IMR-90 (cell line): ENCODE measurements at regions of chr17 and their contacts with region 1.

Region 1: GRCh38 chr17:39653662-39654331 is 11.4 kb upstream of the TCAP start:
- DNase-seq: no peak
- ATAC-seq: no peak; the same call in 1 of the 2 replicates
- H3K4me3 ChIP-seq: no peak overlapping the region
- H3K27ac ChIP-seq: no peak overlapping the region
- H3K4me1 ChIP-seq: peaks cover under 1% of the 10 kb centered on the region; the same call in 1 of the 2 replicates
- H3K27me3 ChIP-seq: no peaks in the 10 kb centered on the region
- CTCF ChIP-seq: peak; percentile 70
- POLR2A ChIP-seq: no peak
- RAD21 ChIP-seq: peak; percentile 33; the same call in 1 of the 2 replicates

Region 2: DNA sequence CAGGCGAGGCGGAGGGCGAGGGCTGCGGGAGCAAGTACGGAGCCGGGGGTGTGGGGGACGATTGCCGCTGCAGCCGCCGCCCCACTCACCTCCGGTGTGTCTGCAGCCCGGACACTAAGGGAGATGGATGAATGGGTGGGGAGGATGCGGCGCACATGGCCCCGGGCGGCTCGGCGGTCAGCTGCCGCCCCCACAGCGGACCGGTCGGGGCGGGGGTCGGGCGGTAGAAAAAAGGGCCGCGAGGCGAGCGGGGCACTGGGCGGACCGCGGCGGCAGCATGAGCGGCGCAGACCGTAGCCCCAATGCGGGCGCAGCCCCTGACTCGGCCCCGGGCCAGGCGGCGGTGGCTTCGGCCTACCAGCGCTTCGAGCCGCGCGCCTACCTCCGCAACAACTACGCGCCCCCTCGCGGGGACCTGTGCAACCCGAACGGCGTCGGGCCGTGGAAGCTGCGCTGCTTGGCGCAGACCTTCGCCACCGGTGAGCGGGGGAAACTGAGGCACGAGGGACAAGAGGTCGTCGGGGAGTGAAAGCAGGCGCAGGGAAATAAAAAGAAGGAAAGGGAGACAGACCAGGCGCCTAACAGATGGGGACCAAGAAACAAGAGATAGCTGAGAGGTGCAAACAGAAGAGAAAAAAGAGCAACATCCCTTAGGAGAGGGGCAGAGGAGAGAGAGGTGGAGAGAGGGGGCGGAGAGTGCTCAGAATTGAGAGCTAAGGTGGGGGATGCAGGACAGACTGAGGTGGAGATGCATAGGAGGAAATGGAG is 14.6 kb after region 1 on chr17 and contains the start of gene PNMT:
- CTCF ChIA-PET with region 1: interaction called, 10 read pairs
- POLR2A ChIA-PET with region 1: no interaction called
- dilution Hi-C with region 1: no loop called
- in situ Hi-C with region 1: no loop called
- intact Hi-C with region 1: no loop called
- DNase-seq: peak; percentile 39
- ATAC-seq: peak; percentile 67
- H3K4me3 ChIP-seq: no peak within 1 kb of the TSS
- H3K27ac ChIP-seq: no peak within 1 kb of the TSS
- H3K4me1 ChIP-seq: peaks cover 7% of the 10 kb centered on the region; the same call in 1 of the 2 replicates
- H3K27me3 ChIP-seq: peaks cover 44% of the 10 kb centered on the region
- CTCF ChIP-seq: peak; percentile 62
- POLR2A ChIP-seq: no peak
- RAD21 ChIP-seq: peak; percentile 49
- total RNA-seq, gene PNMT: not detected in 2 replicates

Region 3: GRCh38 chr17:39722965-39723848 is 69.4 kb after region 1 on chr17:
- CTCF ChIA-PET with region 1: interaction called, 15 read pairs
- POLR2A ChIA-PET with region 1: no interaction called
- dilution Hi-C with region 1: no loop called
- in situ Hi-C with region 1: no loop called
- intact Hi-C with region 1: no loop called
- DNase-seq: no peak
- ATAC-seq: no peak
- H3K4me3 ChIP-seq: no peak overlapping the region
- H3K27ac ChIP-seq: no peak overlapping the region
- H3K4me1 ChIP-seq: no peaks in the 10 kb centered on the region
- H3K27me3 ChIP-seq: no peaks in the 10 kb centered on the region
- CTCF ChIP-seq: no peak
- POLR2A ChIP-seq: no peak
- RAD21 ChIP-seq: no peak